Mammary epithelial cell (primary cell): ENCODE measurements at regions of chr14 and their contacts with region 1.

Region 1: GRCh38 chr14:99415496-99416281 is 65.0 kb downstream of the SETD3 start:
- DNase-seq: peak; percentile 66
- H3K4me3 ChIP-seq: no peak overlapping the region
- H3K27ac ChIP-seq: no peak overlapping the region
- H3K4me1 ChIP-seq: peaks cover 5% of the 10 kb centered on the region
- H3K27me3 ChIP-seq: no peaks in the 10 kb centered on the region
- CTCF ChIP-seq: peak; percentile 80 to 83

Region 2: GRCh38 chr14:99320105-99320572 is 95.5 kb before region 1 on chr14:
- CTCF ChIA-PET with region 1: interaction called, 6 read pairs
- dilution Hi-C with region 1: no loop called
- in situ Hi-C with region 1: loop called (anchors 10 to 25 kb)
- intact Hi-C with region 1: loop called (anchors 1 kb)
- DNase-seq: peak; percentile 26
- H3K4me3 ChIP-seq: peak overlapping the region in 1 of 3 experiments; percentile 27
- H3K27ac ChIP-seq: no peak overlapping the region
- H3K4me1 ChIP-seq: peaks cover 13% of the 10 kb centered on the region
- H3K27me3 ChIP-seq: no peaks in the 10 kb centered on the region
- CTCF ChIP-seq: peak; percentile 86 to 96

Region 3: DNA sequence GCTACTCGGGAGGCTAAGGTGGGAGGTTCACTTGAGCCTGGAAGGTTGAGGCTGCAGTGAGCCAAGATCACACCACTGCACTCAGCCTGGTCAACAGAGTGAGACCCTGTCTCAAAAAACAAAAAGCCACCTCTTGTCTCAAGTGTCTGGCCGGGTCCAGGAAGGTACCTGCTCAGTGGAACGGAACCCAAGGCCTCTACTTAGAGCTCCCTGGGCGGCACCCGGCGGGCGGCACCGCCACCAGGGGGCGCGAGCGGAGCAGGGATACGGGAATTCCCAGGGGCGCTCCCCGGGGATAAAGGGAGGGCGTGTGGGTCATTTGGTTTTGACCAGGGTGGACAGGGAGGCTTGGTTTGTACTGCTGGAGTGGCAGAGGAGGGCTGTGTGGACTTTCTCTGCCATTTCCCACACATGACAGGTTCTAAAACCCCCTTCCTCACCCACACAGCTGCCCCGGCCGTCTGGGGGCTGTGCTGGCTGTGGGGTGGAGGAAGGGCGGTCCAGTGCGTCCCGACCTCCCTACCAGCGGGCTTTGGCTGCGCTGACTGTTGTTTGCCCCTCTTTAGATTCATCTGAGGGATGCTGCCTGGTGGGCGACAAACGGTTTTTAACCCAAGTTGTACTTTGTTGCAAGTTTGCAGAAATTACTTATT is 26.4 kb before region 1 on chr14:
- CTCF ChIA-PET with region 1: no interaction called
- dilution Hi-C with region 1: no loop called
- in situ Hi-C with region 1: no loop called
- intact Hi-C with region 1: loop called (anchors 1 kb)
- DNase-seq: peak; percentile 21
- H3K4me3 ChIP-seq: no peak overlapping the region
- H3K27ac ChIP-seq: no peak overlapping the region
- H3K4me1 ChIP-seq: no peaks in the 10 kb centered on the region
- H3K27me3 ChIP-seq: peaks cover 3% of the 10 kb centered on the region
- CTCF ChIP-seq: peak; percentile 56 to 81